Activated CD4-positive, alpha-beta T cell treated with anti-CD3 and anti-CD28 coated beads, Interleukin-2, amount 10 ng/mL, durations not matched to agents 24 days and 14 days (primary cell): ENCODE measurements at regions of chr14 and their contacts with region 1.

Region 1: GRCh38 chr14:24058260-24058950 is 6.6 kb downstream of the CARMIL3 start:
- DNase-seq: peak; percentile 89
- H3K4me3 Mint-ChIP-seq: no peak overlapping the region
- H3K27ac Mint-ChIP-seq: no peak overlapping the region
- H3K4me1 Mint-ChIP-seq: peaks cover 11% of the 10 kb centered on the region
- H3K27me3 Mint-ChIP-seq: no peaks in the 10 kb centered on the region

Region 2: DNA sequence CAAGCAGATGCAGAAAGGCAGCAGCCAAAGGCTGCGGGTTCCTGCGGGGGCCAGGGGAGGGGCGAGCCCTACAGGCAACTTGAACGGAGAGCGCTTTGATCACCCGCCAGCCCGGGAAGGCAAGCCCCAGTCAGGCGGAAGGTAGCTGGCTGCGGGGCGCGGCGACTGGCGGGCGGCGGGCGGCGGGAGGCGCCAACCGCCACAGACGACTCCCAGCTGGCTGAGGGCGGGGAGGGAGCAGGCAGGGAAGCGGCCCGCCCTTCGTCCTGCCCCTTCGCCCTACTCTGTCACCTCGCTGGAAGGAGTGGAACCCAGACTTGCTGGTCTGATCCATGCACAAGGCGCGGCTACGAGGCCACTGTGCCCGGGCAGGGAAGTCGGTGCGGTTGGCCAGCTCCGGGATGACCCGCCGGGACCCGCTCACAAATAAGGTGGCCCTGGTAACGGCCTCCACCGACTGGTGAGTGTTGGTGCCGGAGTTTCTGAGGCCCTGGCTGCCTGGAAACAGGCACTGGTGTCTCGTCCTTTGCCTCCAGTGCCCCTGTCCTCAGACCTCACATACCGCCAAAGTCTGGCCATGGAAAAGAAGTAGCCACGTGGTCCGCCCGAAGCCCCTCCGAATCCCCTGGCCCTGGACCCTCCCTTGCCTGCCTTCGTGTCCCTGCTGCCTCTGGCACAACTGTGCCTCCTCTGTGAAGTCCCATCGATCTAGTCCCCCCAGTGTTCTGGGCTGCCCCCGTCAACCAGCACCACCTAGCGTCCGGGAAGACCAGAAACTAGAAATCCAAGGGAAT is 22.0 kb before region 1 on chr14:
- intact Hi-C with region 1: no loop called
- DNase-seq: peak; percentile 91
- H3K4me3 Mint-ChIP-seq: peak overlapping the region; percentile 91
- H3K27ac Mint-ChIP-seq: peak overlapping the region; percentile 87
- H3K4me1 Mint-ChIP-seq: peaks cover 13% of the 10 kb centered on the region
- H3K27me3 Mint-ChIP-seq: peaks cover 3% of the 10 kb centered on the region

Region 3: GRCh38 chr14:24108336-24108874 is 50.0 kb after region 1 on chr14:
- intact Hi-C with region 1: loop called (anchors 1 kb)
- DNase-seq: no peak
- H3K4me3 Mint-ChIP-seq: peak overlapping the region; percentile 61
- H3K27ac Mint-ChIP-seq: peak overlapping the region; percentile 96
- H3K4me1 Mint-ChIP-seq: peaks cover 25% of the 10 kb centered on the region
- H3K27me3 Mint-ChIP-seq: no peaks in the 10 kb centered on the region

Region 4: GRCh38 chr14:24224618-24225071 is 166.2 kb after region 1 on chr14:
- intact Hi-C with region 1: no loop called
- DNase-seq: no peak
- H3K4me3 Mint-ChIP-seq: no peak overlapping the region
- H3K27ac Mint-ChIP-seq: no peak overlapping the region
- H3K4me1 Mint-ChIP-seq: peaks cover 14% of the 10 kb centered on the region
- H3K27me3 Mint-ChIP-seq: no peaks in the 10 kb centered on the region

Region 5: GRCh38 chr14:24843494-24843893 is 785.1 kb after region 1 on chr14:
- intact Hi-C with region 1: no loop called
- DNase-seq: no peak
- H3K4me3 Mint-ChIP-seq: no peak overlapping the region
- H3K27ac Mint-ChIP-seq: no peak overlapping the region
- H3K4me1 Mint-ChIP-seq: no peaks in the 10 kb centered on the region
- H3K27me3 Mint-ChIP-seq: peaks cover 17% of the 10 kb centered on the region